A673 (cell line): ENCODE measurements at regions of chr16 and their contacts with region 1.

Region 1: DNA sequence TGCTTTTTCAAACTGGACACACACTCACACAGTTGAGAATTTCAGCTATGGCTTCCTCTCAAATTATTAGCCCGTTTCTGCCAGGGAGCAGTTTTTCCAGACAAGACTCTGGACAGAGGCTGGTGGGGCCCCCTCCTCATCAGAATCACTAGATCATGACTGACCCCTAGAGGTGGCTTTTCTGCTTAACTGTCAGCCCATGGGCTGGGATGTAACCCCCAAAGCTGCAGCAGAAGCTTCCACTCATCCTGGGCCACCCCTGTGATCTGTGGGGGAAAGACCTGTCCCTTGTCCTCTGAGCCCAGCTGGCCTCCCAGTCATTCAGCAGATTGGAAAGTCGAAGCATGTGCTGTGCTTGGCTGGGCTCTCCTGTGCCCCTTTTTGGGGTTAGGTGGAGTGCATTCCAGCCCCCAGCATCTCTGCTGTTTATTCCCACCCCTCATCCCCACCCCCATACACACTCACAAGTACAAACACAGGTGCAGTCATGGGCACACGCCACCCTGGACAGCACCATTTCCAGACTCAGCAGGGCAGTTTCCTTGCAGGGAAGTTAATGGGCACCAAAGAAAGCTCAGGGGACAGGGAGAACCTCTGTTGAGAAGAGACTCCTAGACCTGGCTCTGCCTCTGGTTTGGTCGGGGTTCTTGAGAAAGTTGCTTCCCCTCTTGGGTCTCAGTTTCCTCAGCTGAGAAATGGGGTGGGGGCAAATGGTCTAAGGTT is 77.6 kb upstream of the RBL2 start:
- DNase-seq: no peak
- H3K4me3 ChIP-seq: no peak overlapping the region
- H3K27ac ChIP-seq: no peak overlapping the region
- H3K4me1 ChIP-seq: no peaks in the 10 kb centered on the region
- H3K27me3 ChIP-seq: no peaks in the 10 kb centered on the region
- CTCF ChIP-seq: peak; percentile 38

Region 2: DNA sequence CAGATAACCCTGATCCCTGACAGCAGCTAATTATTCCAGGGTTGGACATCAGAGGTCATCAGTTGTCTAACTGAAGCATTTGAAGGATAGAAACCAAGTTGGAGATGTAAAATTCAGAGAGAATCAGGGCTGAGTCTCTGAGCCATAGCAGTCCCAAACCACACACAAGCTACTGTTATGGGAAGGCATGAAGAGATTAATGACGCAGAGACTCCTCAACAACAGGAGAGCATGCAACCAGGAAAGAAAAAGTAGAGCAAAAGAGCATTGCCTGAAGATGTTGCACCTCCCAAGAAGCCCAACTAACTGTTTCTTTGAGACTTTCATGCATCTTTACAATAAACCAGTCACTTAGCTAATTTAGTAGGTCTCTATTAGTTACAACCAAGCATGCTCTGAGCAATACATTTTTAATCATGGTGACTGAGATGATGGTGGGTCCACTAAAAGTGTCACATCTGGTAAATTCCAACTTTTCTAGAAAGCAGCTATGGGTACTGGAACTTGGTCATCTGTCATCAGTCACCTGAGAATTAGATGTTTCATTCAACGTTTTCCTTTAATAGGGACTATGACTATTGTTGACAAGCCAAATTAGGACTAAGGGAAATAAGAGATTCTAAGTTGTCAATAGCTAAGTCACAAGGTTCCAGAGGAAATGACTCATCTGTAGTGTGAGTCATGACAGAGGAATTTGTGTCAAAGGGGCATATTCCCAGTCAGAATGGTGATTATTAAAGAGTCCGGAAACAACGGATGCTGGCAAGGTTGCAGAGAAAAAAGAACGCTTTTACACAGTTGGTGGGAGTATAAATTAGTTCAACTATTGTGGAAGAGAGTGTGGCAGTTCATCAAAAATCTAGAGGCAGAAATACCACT is 543.7 kb before region 1 on chr16:
- CTCF ChIA-PET with region 1: interaction called, 10 read pairs
- POLR2A ChIA-PET with region 1: no interaction called
- intact Hi-C with region 1: no loop called
- DNase-seq: peak; percentile 97
- H3K4me3 ChIP-seq: no peak overlapping the region
- H3K27ac ChIP-seq: peak overlapping the region; percentile 57
- H3K4me1 ChIP-seq: peaks cover 18% of the 10 kb centered on the region
- H3K27me3 ChIP-seq: no peaks in the 10 kb centered on the region
- CTCF ChIP-seq: no peak

Region 3: DNA sequence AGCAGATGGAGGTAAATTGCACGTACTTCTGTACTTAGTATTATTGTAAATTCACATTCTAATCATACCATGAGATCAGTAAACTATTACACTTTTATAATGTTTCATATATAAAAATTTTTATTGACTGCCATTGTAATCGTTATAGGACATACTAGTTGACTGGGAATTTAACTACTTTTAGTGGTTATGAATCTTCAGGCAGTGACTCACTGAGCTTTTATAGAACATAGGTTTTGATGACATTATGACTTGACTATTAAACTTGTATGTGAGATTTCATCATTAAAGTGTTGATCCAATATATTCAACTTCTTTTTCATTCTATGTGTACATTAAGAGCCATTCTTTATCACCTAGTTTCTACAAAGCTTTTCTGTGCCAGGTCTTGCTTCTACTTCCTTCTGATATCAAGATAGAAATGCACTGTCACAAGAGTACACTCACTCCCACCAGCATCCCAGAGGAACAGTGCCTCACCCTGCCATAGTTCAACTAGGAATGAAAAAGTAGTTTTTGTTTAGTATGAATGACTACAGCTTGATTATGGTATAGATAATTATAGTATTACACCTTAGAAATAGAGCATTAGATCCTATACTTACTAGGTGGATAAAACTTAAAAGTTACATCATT is 64.8 kb before region 1 on chr16:
- CTCF ChIA-PET with region 1: no interaction called
- POLR2A ChIA-PET with region 1: no interaction called
- intact Hi-C with region 1: no loop called
- DNase-seq: no peak
- H3K4me3 ChIP-seq: no peak overlapping the region
- H3K27ac ChIP-seq: no peak overlapping the region
- H3K4me1 ChIP-seq: no peaks in the 10 kb centered on the region
- H3K27me3 ChIP-seq: no peaks in the 10 kb centered on the region
- CTCF ChIP-seq: no peak

Region 4: DNA sequence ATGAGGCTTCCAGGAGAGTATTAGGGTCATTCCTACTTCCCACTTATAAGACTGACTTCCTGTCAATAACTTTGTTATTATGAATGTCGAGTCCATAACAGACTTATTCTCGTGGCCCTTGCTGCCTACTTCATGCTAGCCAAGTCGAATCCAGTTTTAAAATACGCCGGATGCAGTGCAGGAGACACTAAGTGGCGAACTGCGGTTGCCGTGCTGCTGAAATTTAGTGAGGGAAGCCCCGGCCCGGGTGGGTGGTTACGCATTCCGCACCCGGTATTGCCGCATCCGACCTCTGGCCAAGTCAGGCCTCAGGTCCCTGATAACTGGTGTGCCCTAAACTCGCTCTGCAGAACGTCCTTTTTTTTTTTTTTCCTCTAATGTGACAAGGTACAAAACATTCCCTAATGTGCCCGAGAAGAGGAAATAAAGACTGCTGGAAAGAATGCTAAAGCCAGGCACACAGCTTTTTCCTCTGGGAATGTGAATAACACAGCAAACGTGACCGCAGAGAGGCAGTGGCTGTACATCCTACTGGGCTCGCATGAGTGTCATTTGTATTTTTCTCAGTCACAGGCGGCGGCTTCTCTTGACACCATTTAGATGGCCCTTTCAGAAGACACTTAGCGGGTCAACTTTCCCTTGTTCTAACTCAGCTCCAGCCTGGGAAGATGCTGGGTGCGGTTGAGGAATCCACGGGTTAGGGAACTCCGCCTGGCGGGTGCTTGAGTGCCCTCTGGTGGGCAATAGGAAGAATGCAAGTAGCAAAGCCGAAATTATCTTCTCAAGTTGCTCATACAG is 153.5 kb after region 1 on chr16:
- CTCF ChIA-PET with region 1: no interaction called
- POLR2A ChIA-PET with region 1: no interaction called
- intact Hi-C with region 1: loop called (anchors 10 kb)
- DNase-seq: peak; percentile 74
- H3K4me3 ChIP-seq: no peak overlapping the region
- H3K27ac ChIP-seq: no peak overlapping the region
- H3K4me1 ChIP-seq: no peaks in the 10 kb centered on the region
- H3K27me3 ChIP-seq: no peaks in the 10 kb centered on the region
- CTCF ChIP-seq: peak; percentile 96